Panc1 (cell line): ENCODE measurements at regions of chr5 and their contacts with region 1.

Region 1: GRCh38 chr5:157400741-157401495 is 59.1 kb upstream of the NIPAL4 start:
- DNase-seq: no peak
- ATAC-seq: no peak
- H3K4me3 ChIP-seq: no peak overlapping the region
- H3K27ac ChIP-seq: no peak overlapping the region
- H3K4me1 ChIP-seq: no peaks in the 10 kb centered on the region
- H3K27me3 ChIP-seq: no peaks in the 10 kb centered on the region
- CTCF ChIP-seq: no peak

Region 2: DNA sequence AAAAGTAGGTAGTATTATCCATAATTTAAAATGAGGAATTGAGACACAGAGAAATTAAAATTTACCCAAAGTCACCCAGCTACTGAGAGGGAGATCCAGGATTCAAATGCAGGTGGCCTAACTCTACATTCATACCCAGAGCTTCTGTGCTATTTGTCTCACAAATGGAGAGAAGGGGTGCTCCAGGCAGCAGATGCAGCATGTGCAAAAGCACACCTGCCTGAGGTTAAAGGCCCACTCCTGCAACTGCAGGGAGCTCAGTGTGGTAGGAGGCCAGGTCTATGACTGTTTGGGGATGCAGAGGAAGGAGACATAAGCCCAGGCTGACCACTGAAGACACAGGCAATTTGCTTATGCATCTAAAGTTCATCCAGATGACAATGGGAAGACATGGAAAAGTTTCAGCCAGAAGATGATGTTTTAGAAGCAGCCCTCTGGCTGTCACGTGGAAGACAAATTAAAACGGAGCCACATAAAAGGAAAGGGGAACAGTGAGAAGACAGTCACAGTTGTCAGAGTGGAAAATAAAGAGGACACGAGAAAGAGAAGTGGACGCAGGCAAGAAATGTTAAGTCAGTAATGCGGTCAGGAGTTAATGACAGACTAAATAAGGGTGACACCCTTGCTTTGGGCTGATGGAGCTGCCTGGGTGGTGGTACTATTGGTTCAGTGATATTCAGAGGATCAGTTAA is 1484.1 kb after region 1 on chr5:
- CTCF ChIA-PET with region 1: no interaction called
- POLR2A ChIA-PET with region 1: interaction called, 10 read pairs
- in situ Hi-C with region 1: no loop called
- intact Hi-C with region 1: no loop called
- DNase-seq: no peak
- ATAC-seq: no peak
- H3K4me3 ChIP-seq: no peak overlapping the region
- H3K27ac ChIP-seq: no peak overlapping the region
- H3K4me1 ChIP-seq: no peaks in the 10 kb centered on the region
- H3K27me3 ChIP-seq: peaks cover 2% of the 10 kb centered on the region; the same call in 1 of the 2 replicates
- CTCF ChIP-seq: no peak